ENCODE measurements at regions of chr15 and their contacts with region 1.

Region 1: GRCh38 chr15:75684642-75685041 is 28.0 kb downstream of the CSPG4 start:
- DNase-seq: no peak
- ATAC-seq: no peak
- H3K4me3 ChIP-seq: no peak overlapping the region
- H3K27ac ChIP-seq: no peak overlapping the region
- H3K4me1 ChIP-seq: peaks cover 0 to 16% (median 5%) of the 10 kb centered on the region in 9 donors
- H3K27me3 ChIP-seq: no peaks in the 10 kb centered on the region
- CTCF ChIP-seq: no peak

Region 2: GRCh38 chr15:75483961-75484360 is 200.7 kb before region 1 on chr15:
- intact Hi-C with region 1: no loop called
- DNase-seq: no peak
- ATAC-seq: no peak
- H3K4me3 ChIP-seq: no peak overlapping the region
- H3K27ac ChIP-seq: no peak overlapping the region
- H3K4me1 ChIP-seq: peaks cover 0 to 10% (median 0%) of the 10 kb centered on the region in 9 donors
- H3K27me3 ChIP-seq: no peaks in the 10 kb centered on the region
- CTCF ChIP-seq: no peak

Region 3: GRCh38 chr15:75508840-75509532 is 175.7 kb before region 1 on chr15:
- intact Hi-C with region 1: loop called in 2 of 10 experiments (anchors 5 to 10 kb)
- DNase-seq: peak in 1 of 2 donors; percentile 8
- ATAC-seq: peak in 2 of 8 donors; percentile 20 to 64
- H3K4me3 ChIP-seq: no peak overlapping the region
- H3K27ac ChIP-seq: no peak overlapping the region
- H3K4me1 ChIP-seq: peaks cover 0 to 5% (median 0%) of the 10 kb centered on the region in 9 donors
- H3K27me3 ChIP-seq: no peaks in the 10 kb centered on the region
- CTCF ChIP-seq: peak; percentile 12 to 66 (median 54)

Region 4: GRCh38 chr15:75578948-75579920 is 105.4 kb before region 1 on chr15 and contains the start of gene PTPN9:
- intact Hi-C with region 1: no loop called
- DNase-seq: peak; percentile 83 to 87
- ATAC-seq: peak; percentile 88 to 93 (median 91)
- H3K4me3 ChIP-seq: peak within 1 kb of the TSS; percentile 57 to 99 (median 96)
- H3K27ac ChIP-seq: peak within 1 kb of the TSS; percentile 82 to 98 (median 94)
- H3K4me1 ChIP-seq: peaks cover 1 to 28% (median 24%) of the 10 kb centered on the region in 9 donors
- H3K27me3 ChIP-seq: no peaks in the 10 kb centered on the region
- CTCF ChIP-seq: peak; percentile 14 to 79 (median 56)
- total RNA-seq, gene PTPN9: 5.8 to 11.0 (median 8.4) TPM

Region 5: GRCh38 chr15:75647370-75648155 is 37.1 kb before region 1 on chr15 and contains the start of gene SNX33:
- intact Hi-C with region 1: no loop called
- DNase-seq: peak; percentile 83 to 87
- ATAC-seq: peak; percentile 79 to 88 (median 82)
- H3K4me3 ChIP-seq: peak within 1 kb of the TSS; percentile 67 to 87 (median 77)
- H3K27ac ChIP-seq: peak within 1 kb of the TSS; percentile 90 to 98 (median 96)
- H3K4me1 ChIP-seq: peaks cover 33 to 59% (median 51%) of the 10 kb centered on the region in 9 donors
- H3K27me3 ChIP-seq: peaks cover 0 to 5% (median 0%) of the 10 kb centered on the region in 7 donors
- CTCF ChIP-seq: peak; percentile 26 to 69 (median 52)
- total RNA-seq, gene SNX33: 7.6 to 14.8 (median 9.8) TPM

Region 6: GRCh38 chr15:75732809-75733451 is 48.3 kb after region 1 on chr15:
- intact Hi-C with region 1: loop called in 4 of 10 experiments (anchors 2 to 10 kb)
- DNase-seq: peak; percentile 70 to 79
- ATAC-seq: peak; percentile 63 to 81 (median 71)
- H3K4me3 ChIP-seq: peak overlapping the region in 1 of 10 donors; percentile 8
- H3K27ac ChIP-seq: peak overlapping the region in 2 of 10 donors; percentile 31 to 55
- H3K4me1 ChIP-seq: peaks cover 10 to 42% (median 23%) of the 10 kb centered on the region in 9 donors
- H3K27me3 ChIP-seq: peaks cover 0 to 3% (median 0%) of the 10 kb centered on the region in 7 donors
- CTCF ChIP-seq: peak; percentile 78 to 94 (median 87)

Region 7: DNA sequence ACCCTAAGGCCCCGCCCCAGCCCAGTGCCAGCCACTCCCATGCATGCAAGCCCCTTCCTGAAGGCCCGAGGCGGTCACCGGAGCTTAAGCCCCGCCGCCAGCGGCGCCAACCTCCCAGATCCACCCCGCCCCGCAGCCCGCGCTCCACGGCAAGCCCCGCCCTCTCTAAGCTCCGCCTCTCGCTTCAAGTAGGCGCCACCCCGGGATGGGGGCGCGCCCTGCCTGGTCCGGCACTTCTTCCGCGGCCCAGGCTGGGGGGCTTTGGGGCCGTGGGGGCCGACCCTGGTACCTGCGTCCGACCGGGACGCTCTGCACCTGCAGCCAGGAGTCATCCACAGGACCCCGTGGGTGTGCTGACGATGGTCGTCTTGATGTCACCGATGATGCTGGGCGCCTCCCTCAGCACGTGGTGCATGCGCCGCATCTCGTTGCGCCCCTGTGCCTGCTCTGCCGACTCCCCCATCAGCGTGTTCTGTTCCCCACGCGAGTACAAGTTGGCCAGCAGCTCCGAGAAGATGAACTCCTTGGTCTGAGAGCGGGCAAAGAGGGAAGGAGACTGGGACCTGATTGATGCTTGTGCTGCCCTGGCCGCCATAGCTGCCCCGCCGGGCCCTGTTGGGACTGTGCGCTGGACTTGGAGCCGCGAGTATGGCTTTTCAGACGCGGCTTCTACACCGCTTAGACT is 54.1 kb after region 1 on chr15:
- intact Hi-C with region 1: loop called in 3 of 10 experiments (anchors 2 to 10 kb)
- DNase-seq: peak; percentile 93 to 95
- ATAC-seq: peak; percentile 96 to 99 (median 98)
- H3K4me3 ChIP-seq: peak overlapping the region; percentile 59 to 93 (median 72)
- H3K27ac ChIP-seq: peak overlapping the region in 4 of 10 donors; percentile 20 to 54 (median 43)
- H3K4me1 ChIP-seq: peaks cover 6 to 32% (median 14%) of the 10 kb centered on the region in 9 donors
- H3K27me3 ChIP-seq: no peaks in the 10 kb centered on the region
- CTCF ChIP-seq: no peak

Region 8: DNA sequence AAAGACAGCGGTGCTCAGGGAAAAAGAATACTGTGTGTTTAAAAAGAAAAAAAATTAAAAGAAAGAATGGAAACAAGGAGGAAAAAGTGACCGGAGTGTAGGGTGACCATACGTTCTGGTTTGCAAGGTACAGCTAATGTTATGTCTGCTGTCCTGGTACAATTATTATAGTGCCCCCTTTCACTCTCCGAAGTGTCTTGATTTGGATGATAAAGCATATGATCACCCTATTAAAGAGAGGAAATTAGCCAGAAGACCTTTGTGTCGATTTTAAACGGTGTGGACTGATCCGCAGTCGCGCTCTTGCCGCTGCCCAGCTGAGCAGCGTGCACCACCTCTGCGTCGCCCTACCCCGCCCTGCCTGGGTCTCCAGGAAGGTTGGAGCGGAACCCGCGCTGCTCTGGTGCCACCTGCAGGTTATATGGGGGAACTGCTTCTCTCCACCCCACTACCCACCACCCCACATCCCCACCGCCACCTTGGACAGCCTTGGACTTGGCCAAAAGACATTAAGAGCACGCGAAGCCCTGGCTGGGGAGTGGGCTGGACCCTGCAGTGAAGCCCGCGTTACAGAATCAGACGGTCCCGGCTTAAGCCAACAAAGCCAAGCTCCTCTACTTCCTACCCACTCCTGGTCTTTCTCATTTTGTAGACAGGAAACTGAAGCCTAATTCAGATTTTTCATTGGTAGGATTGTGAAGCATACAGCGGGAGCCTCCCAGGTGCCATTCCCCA is 117.4 kb after region 1 on chr15:
- intact Hi-C with region 1: loop called in 6 of 10 experiments (anchors 2 to 5 kb)
- DNase-seq: peak; percentile 78 to 83
- ATAC-seq: peak; percentile 95 to 99 (median 97)
- H3K4me3 ChIP-seq: peak overlapping the region in 8 of 10 donors; percentile 11 to 38 (median 28)
- H3K27ac ChIP-seq: no peak overlapping the region
- H3K4me1 ChIP-seq: peaks cover 0 to 17% (median 5%) of the 10 kb centered on the region in 9 donors
- H3K27me3 ChIP-seq: peaks cover 0 to 42% (median 25%) of the 10 kb centered on the region in 7 donors
- CTCF ChIP-seq: peak; percentile 82 to 98 (median 93)